ENCODE measurements at regions of chr3 and their contacts with region 1.

Region 1: DNA sequence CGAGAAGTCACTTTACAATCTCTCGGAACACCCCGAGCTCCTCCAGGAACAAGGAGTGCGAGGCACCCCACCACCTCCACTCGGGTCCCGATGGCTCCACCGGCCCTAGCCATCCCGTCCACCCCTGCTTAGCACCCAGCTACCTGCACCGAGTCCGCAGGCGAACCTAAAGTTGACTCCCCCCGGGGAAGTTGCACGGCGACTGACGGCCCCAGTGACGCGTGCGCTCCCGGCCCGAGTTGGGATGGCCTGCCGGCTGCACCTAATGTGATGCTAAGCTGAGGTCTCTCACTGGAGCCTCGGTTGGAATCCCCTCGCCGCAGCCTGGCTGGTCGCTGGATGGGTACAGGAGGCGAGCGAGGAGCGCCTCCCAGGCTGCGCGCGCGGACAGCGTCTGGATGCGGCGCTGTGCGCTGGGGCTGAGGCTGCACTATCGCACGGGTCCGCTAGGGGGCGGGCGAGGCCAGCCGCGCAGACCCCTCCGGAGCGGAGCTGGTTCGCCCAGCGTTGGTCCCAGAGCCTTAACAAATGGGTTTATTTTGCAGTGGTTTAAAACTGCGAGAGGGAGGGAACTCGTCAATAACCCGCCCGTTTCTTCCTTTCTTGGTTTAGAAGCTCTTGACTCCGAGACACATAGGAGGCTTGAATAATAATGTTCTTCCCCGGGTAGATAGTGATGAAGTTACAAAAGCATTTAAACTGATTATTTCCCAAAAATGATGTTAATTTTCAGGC is at the start of gene OXTR:
- DNase-seq: peak; percentile 62
- H3K4me3 Mint-ChIP-seq: peak within 1 kb of the TSS; percentile 36
- H3K27ac Mint-ChIP-seq: no peak within 1 kb of the TSS
- H3K4me1 Mint-ChIP-seq: peaks cover 14% of the 10 kb centered on the region
- H3K27me3 Mint-ChIP-seq: peaks cover 44% of the 10 kb centered on the region
- total RNA-seq, gene OXTR: 0.57 to 0.74 TPM

Region 2: DNA sequence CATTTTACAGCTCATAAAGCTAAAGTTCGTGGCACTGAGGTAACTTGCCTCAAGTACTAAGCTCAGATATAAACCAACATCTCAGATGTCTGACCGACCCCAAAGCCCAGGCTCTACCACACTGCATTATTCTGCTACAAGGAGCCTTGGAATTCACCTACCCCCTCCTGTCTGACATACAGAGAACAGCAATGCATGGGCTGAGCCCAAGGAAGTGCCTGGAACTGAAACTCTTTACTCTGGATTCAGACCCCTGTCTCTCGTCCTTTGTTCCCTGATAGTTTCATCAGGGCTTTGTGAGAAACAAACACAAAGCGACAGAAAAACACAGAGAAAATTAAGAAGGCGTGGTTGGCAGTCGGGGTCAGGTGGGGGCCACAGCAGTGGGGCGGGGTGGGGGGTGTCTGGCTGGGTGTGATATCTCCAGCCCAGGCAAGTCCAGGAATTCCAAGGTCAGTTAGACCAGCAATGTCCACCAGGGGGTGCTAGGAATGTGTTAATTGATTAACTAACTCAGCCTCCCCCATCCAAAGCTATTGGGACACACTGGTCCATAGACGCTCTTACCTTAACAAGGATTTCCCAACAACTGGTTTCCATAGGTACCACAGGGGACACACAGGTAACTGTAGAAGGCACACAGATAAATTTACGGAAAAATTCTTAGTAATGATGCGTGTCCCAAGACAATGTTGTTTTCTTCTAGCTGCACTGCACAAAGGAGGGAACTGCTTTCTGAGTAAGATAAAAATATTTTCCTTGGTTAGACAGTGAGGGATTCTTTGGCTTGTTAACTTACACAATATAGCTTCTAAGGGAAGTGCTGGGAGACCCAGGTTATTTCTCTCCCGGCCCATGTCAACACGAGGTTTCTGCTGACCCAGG is 105.8 kb before region 1 on chr3:
- CTCF ChIA-PET with region 1: interaction called, 4 read pairs
- intact Hi-C with region 1: loop called (anchors 5 kb)
- DNase-seq: peak; percentile 69
- H3K4me3 Mint-ChIP-seq: no peak overlapping the region
- H3K27ac Mint-ChIP-seq: no peak overlapping the region
- H3K4me1 Mint-ChIP-seq: no peaks in the 10 kb centered on the region
- H3K27me3 Mint-ChIP-seq: peaks cover 25% of the 10 kb centered on the region

Region 3: DNA sequence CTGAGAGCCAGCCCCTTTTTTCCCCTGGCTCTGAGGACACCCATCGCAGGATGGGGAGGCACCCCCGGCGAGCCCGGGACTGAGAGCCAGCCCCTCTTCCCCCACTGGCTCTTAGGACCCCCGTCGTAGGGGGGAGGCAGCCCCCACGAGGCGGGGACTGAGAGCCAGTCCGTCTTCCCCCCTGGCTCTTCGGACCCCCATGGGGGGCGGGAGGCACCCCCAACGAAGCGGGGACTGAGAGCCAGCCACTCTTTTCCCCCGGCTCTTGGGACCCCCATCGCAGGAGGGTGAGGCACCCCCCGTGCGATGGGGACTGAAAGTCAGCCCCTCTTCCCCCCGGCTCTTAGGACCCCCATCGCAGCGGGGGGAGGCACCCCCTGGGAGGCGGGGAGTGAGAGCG is 87.9 kb before region 1 on chr3:
- CTCF ChIA-PET with region 1: no interaction called
- intact Hi-C with region 1: loop called (anchors 5 kb)
- DNase-seq: no peak
- H3K4me3 Mint-ChIP-seq: no peak overlapping the region
- H3K27ac Mint-ChIP-seq: no peak overlapping the region
- H3K4me1 Mint-ChIP-seq: no peaks in the 10 kb centered on the region
- H3K27me3 Mint-ChIP-seq: peaks cover 9% of the 10 kb centered on the region

Region 4: DNA sequence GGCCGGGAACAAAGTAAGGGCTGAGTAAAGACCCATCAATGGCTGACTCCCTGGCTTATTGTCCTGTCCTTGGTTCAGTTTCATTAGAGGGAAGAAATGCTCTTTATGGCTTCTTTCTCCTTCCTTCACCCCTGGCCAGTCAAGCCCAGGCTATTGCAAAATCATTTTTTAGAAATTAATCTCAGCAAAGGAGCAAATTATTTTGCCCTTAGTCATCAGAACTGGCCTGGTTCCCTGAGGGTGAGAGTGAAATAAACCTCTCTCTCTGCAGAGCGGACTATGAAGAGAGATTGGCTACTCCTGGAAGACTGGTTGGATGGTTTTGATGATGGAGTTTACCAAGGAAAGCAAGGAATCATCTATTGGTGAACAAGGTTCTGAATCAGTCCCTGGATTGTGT is 52.9 kb after region 1 on chr3:
- CTCF ChIA-PET with region 1: no interaction called
- intact Hi-C with region 1: no loop called
- DNase-seq: no peak
- H3K4me3 Mint-ChIP-seq: no peak overlapping the region
- H3K27ac Mint-ChIP-seq: no peak overlapping the region
- H3K4me1 Mint-ChIP-seq: no peaks in the 10 kb centered on the region
- H3K27me3 Mint-ChIP-seq: peaks cover 2% of the 10 kb centered on the region

Region 5: GRCh38 chr3:8963137-8963869 is 194.0 kb after region 1 on chr3 and contains the start of gene RAD18:
- CTCF ChIA-PET with region 1: no interaction called
- intact Hi-C with region 1: loop called (anchors 1 kb)
- DNase-seq: peak; percentile 95
- H3K4me3 Mint-ChIP-seq: peak within 1 kb of the TSS; percentile 97
- H3K27ac Mint-ChIP-seq: peak within 1 kb of the TSS; percentile 94
- H3K4me1 Mint-ChIP-seq: peaks cover 35% of the 10 kb centered on the region
- H3K27me3 Mint-ChIP-seq: no peaks in the 10 kb centered on the region
- total RNA-seq, gene RAD18: 44.5 to 45.4 TPM

Region 6: GRCh38 chr3:9067352-9067975 is 298.2 kb after region 1 on chr3:
- CTCF ChIA-PET with region 1: no interaction called
- intact Hi-C with region 1: loop called (anchors 10 kb)
- DNase-seq: peak; percentile 57
- H3K4me3 Mint-ChIP-seq: no peak overlapping the region
- H3K27ac Mint-ChIP-seq: no peak overlapping the region
- H3K4me1 Mint-ChIP-seq: no peaks in the 10 kb centered on the region
- H3K27me3 Mint-ChIP-seq: no peaks in the 10 kb centered on the region

Region 7: GRCh38 chr3:9179826-9180763 is 410.8 kb after region 1 on chr3:
- CTCF ChIA-PET with region 1: no interaction called
- intact Hi-C with region 1: loop called (anchors 5 kb)
- DNase-seq: peak; percentile 57
- H3K4me3 Mint-ChIP-seq: peak overlapping the region; percentile 58
- H3K27ac Mint-ChIP-seq: peak overlapping the region; percentile 54
- H3K4me1 Mint-ChIP-seq: peaks cover 19% of the 10 kb centered on the region
- H3K27me3 Mint-ChIP-seq: no peaks in the 10 kb centered on the region

Measured in activated naive CD4-positive, alpha-beta T cell treated with anti-CD3 and anti-CD28 coated beads for 36 hours (primary cell).